IMR-90 (cell line): ENCODE measurements at regions of chr2 and their contacts with region 1.

Region 1: GRCh38 chr2:42581257-42581656 is 12.8 kb downstream of the MTA3 start:
- DNase-seq: no peak
- ATAC-seq: no peak
- H3K4me3 ChIP-seq: no peak overlapping the region
- H3K27ac ChIP-seq: no peak overlapping the region
- H3K4me1 ChIP-seq: no peaks in the 10 kb centered on the region
- H3K27me3 ChIP-seq: no peaks in the 10 kb centered on the region
- CTCF ChIP-seq: no peak
- POLR2A ChIP-seq: no peak
- RAD21 ChIP-seq: no peak

Region 2: DNA sequence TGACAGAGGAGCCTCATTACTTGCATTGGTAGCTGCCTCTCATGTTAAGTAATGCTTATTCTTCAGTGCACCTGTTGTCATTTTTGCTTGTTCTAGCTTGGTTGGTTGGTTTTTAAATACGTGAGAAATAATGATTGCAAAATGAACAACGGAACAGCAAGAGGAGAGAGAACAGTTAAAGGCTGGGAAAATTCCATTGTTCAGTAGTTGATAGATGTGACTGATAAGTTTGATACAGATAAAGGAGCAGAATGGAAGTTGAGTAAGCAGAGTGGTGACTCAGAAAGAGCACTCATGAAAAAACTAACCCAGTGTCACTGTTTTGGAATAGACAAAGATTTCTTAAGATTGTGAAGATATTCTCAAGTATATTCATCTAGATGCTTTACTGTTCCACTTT is 37.7 kb after region 1 on chr2:
- CTCF ChIA-PET with region 1: no interaction called
- POLR2A ChIA-PET with region 1: no interaction called
- dilution Hi-C with region 1: no loop called
- in situ Hi-C with region 1: no loop called
- intact Hi-C with region 1: loop called (anchors 5 kb)
- DNase-seq: peak; percentile 82
- ATAC-seq: peak; percentile 85
- H3K4me3 ChIP-seq: no peak overlapping the region
- H3K27ac ChIP-seq: no peak overlapping the region
- H3K4me1 ChIP-seq: peaks cover 5% of the 10 kb centered on the region
- H3K27me3 ChIP-seq: no peaks in the 10 kb centered on the region
- CTCF ChIP-seq: no peak
- POLR2A ChIP-seq: no peak
- RAD21 ChIP-seq: no peak